ENCODE measurements at regions of chr6 and their contacts with region 1.

Region 1: GRCh38 chr6:31541658-31542521 is at the start of gene DDX39B:
- DNase-seq: peak; percentile 92 to 99 (median 95)
- ATAC-seq: peak; percentile 86
- H3K4me3 ChIP-seq: peak within 1 kb of the TSS; percentile 76
- H3K27ac ChIP-seq: peak within 1 kb of the TSS; percentile 98
- H3K4me1 ChIP-seq: peaks cover 10 to 24% of the 10 kb centered on the region in 2 experiments; a peak in 4 of 5 replicates
- H3K27me3 ChIP-seq: no peaks in the 10 kb centered on the region
- CTCF ChIP-seq: no peak
- EP300 ChIP-seq: peak; percentile 35; the same call in 1 of the 2 replicates
- POLR2A ChIP-seq: peak; percentile 99
- RAD21 ChIP-seq: no peak
- polyA plus RNA-seq, gene DDX39B: 479 to 565 TPM

Region 2: DNA sequence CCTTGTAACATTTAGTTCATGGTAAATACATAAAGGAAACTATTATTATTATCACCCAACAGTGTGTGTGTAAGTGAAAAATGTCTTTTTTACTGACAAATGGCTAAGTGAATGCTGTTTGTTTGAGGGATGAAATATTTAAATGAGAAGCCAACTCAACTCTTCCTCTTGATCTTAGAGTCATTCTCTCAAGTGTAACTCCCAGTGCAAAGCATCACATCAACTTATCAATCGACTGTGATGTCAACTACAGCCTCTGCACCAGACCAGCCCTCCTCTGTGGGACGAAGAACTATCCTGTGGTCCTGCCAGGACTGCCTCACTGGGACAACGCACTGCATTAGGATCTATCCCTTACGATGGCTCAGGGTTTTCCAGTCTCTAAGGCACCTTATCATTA is 434.8 kb before region 1 on chr6:
- CTCF ChIA-PET with region 1: no interaction called
- POLR2A ChIA-PET with region 1: no interaction called
- in situ Hi-C with region 1: no loop called
- intact Hi-C with region 1: no loop called
- DNase-seq: no peak
- ATAC-seq: no peak
- H3K4me3 ChIP-seq: no peak overlapping the region
- H3K27ac ChIP-seq: no peak overlapping the region
- H3K4me1 ChIP-seq: no peaks in the 10 kb centered on the region; a peak in 1 of 5 replicates
- H3K27me3 ChIP-seq: peaks cover 35 to 45% of the 10 kb centered on the region in 2 experiments
- CTCF ChIP-seq: no peak
- EP300 ChIP-seq: no peak
- POLR2A ChIP-seq: no peak
- RAD21 ChIP-seq: no peak

Region 3: GRCh38 chr6:31403283-31403989 is 138.5 kb before region 1 on chr6 and contains the start of gene MICA:
- CTCF ChIA-PET with region 1: no interaction called
- POLR2A ChIA-PET with region 1: interaction called, 5 read pairs
- in situ Hi-C with region 1: no loop called
- intact Hi-C with region 1: loop called (anchors 5 kb)
- DNase-seq: peak; percentile 96 to 99 (median 98)
- ATAC-seq: peak; percentile 86
- H3K4me3 ChIP-seq: peak within 1 kb of the TSS; percentile 50
- H3K27ac ChIP-seq: peak within 1 kb of the TSS; percentile 24
- H3K4me1 ChIP-seq: peaks cover 29 to 31% of the 10 kb centered on the region in 2 experiments; a peak in 4 of 5 replicates
- H3K27me3 ChIP-seq: no peaks in the 10 kb centered on the region
- CTCF ChIP-seq: no peak; a peak in 1 of 6 replicates
- EP300 ChIP-seq: no peak
- POLR2A ChIP-seq: peak; percentile 81
- RAD21 ChIP-seq: no peak
- polyA plus RNA-seq, gene MICA: 13.5 to 18.0 TPM

Region 4: DNA sequence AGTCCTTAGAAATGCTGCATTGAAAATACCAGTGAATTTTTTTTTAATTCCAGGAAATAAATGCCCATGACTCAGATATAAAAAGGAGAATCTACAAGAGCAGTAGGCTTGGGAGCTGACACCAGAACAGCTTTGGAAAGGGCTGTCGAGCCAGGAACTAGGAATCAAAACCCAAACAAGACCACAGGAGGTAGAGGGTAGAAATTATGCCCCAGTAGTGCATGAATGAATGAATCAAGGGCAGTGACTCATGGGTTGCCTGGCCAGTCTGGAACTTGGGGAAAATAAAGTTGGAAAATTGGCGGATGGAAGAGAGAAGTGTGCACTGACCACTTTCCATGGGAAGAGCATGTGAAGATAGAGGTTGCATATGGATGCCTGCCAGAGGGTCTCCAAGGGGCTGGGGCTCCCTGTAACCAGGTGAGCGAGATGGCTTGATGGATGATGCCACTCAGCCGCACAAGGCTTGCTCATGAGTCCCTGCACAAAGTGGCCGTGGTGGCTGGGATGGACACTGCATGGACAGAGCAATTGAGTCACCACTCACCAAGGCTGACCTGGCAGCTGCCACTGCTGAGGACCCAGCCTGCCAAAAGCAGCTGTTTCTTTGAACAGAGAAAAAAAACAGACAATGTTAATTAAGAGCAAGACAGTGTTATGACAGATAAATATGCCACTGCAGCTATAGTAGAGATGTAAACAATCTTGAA is 28.3 kb before region 1 on chr6:
- CTCF ChIA-PET with region 1: no interaction called
- POLR2A ChIA-PET with region 1: interaction called, 13 read pairs
- in situ Hi-C with region 1: no loop called
- intact Hi-C with region 1: no loop called
- DNase-seq: no peak
- ATAC-seq: no peak
- H3K4me3 ChIP-seq: no peak overlapping the region
- H3K27ac ChIP-seq: no peak overlapping the region
- H3K4me1 ChIP-seq: peaks cover 0 to 3% of the 10 kb centered on the region in 2 experiments; a peak in 2 of 5 replicates
- H3K27me3 ChIP-seq: peaks cover 8 to 15% of the 10 kb centered on the region in 2 experiments; a peak in 4 of 5 replicates
- CTCF ChIP-seq: no peak
- EP300 ChIP-seq: no peak
- POLR2A ChIP-seq: no peak
- RAD21 ChIP-seq: no peak

Region 5: GRCh38 chr6:31580807-31581433 is 39.0 kb after region 1 on chr6:
- CTCF ChIA-PET with region 1: interaction called, 4 read pairs
- POLR2A ChIA-PET with region 1: interaction called, 20 read pairs
- in situ Hi-C with region 1: no loop called
- intact Hi-C with region 1: loop called (anchors 2 kb)
- DNase-seq: peak; percentile 93 to 98 (median 97)
- ATAC-seq: peak; percentile 98
- H3K4me3 ChIP-seq: peak overlapping the region; percentile 62
- H3K27ac ChIP-seq: peak overlapping the region; percentile 45; the same call in 1 of the 3 replicates
- H3K4me1 ChIP-seq: peaks cover 3 to 24% of the 10 kb centered on the region in 2 experiments; a peak in 4 of 5 replicates
- H3K27me3 ChIP-seq: no peaks in the 10 kb centered on the region
- CTCF ChIP-seq: peak; percentile 98 to 99 (median 98)
- EP300 ChIP-seq: peak; percentile 37
- POLR2A ChIP-seq: peak; percentile 81
- RAD21 ChIP-seq: peak; percentile 86 to 88

Region 6: GRCh38 chr6:31660381-31661261 is 118.7 kb after region 1 on chr6 and contains the start of gene C6orf47:
- CTCF ChIA-PET with region 1: no interaction called
- POLR2A ChIA-PET with region 1: interaction called, 12 read pairs
- in situ Hi-C with region 1: loop called (anchors 5 kb)
- intact Hi-C with region 1: loop called (anchors 2 kb)
- DNase-seq: peak; percentile 93 to 99 (median 96)
- ATAC-seq: peak; percentile 82
- H3K4me3 ChIP-seq: peak within 1 kb of the TSS; percentile 52
- H3K27ac ChIP-seq: peak within 1 kb of the TSS; percentile 80
- H3K4me1 ChIP-seq: peaks cover 47 to 65% of the 10 kb centered on the region in 2 experiments
- H3K27me3 ChIP-seq: no peaks in the 10 kb centered on the region
- CTCF ChIP-seq: no peak
- EP300 ChIP-seq: 0 out of 2 replicates have a peak, but pooled peaks have one; percentile 62
- POLR2A ChIP-seq: peak; percentile 93
- RAD21 ChIP-seq: peak; percentile 5 to 28; a peak in 3 of 4 replicates
- polyA plus RNA-seq, gene C6orf47: 0.14 to 0.27 TPM

Region 7: GRCh38 chr6:31851485-31851832 is 309.6 kb after region 1 on chr6:
- CTCF ChIA-PET with region 1: no interaction called
- POLR2A ChIA-PET with region 1: no interaction called
- in situ Hi-C with region 1: no loop called
- intact Hi-C with region 1: no loop called
- DNase-seq: no peak
- ATAC-seq: no peak
- H3K4me3 ChIP-seq: no peak overlapping the region
- H3K27ac ChIP-seq: no peak overlapping the region
- H3K4me1 ChIP-seq: peaks cover 0 to 8% of the 10 kb centered on the region in 2 experiments; a peak in 2 of 5 replicates
- H3K27me3 ChIP-seq: no peaks in the 10 kb centered on the region
- CTCF ChIP-seq: no peak
- EP300 ChIP-seq: no peak
- POLR2A ChIP-seq: no peak
- RAD21 ChIP-seq: no peak

Measured in K562 (cell line).